Activated T-helper 2 cell treated with anti-CD3 and anti-CD28 coated beads, Interferon-gamma antibody, Interleukin-2, Interleukin-4, amounts not matched to agents 10 μg/mL and 5 μg/mL and 100 μg/mL, durations not matched to agents 14 hours and 24 hours and 36 hours (primary cell): ENCODE measurements at regions of chr2 and their contacts with region 1.

Region 1: DNA sequence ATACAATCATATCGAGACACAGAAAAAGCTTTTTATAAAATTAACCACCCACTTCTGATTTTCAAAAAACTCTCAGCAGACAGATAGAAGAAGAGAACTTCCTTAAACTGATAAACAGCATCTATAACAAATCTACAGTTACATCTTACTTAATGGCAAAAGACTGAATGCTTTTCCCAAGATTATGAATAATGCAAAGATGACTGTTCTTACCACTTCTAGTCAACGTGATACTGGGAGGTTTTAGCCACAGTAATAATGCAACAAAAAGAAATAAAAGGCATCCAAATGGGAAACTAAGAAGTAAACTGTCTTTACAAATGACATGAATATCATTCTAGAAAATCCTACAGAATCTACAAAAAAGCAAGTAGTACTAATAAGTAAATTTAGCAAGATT is 58.0 kb upstream of the TMEM247 start:
- DNase-seq: no peak
- H3K4me3 Mint-ChIP-seq: no peak overlapping the region
- H3K27ac Mint-ChIP-seq: no peak overlapping the region
- H3K4me1 Mint-ChIP-seq: peaks cover 34% of the 10 kb centered on the region
- H3K27me3 Mint-ChIP-seq: no peaks in the 10 kb centered on the region

Region 2: GRCh38 chr2:46394649-46395510 is 26.5 kb before region 1 on chr2:
- intact Hi-C with region 1: loop called (anchors 1 kb)
- DNase-seq: no peak
- H3K4me3 Mint-ChIP-seq: no peak overlapping the region
- H3K27ac Mint-ChIP-seq: peak overlapping the region; percentile 91
- H3K4me1 Mint-ChIP-seq: peaks cover 41% of the 10 kb centered on the region
- H3K27me3 Mint-ChIP-seq: peaks cover 3% of the 10 kb centered on the region

Region 3: GRCh38 chr2:46434851-46435273 is 13.5 kb after region 1 on chr2:
- intact Hi-C with region 1: loop called (anchors 1 kb)
- DNase-seq: no peak
- H3K4me3 Mint-ChIP-seq: peak overlapping the region; percentile 37
- H3K27ac Mint-ChIP-seq: peak overlapping the region; percentile 86
- H3K4me1 Mint-ChIP-seq: peaks cover 94% of the 10 kb centered on the region
- H3K27me3 Mint-ChIP-seq: no peaks in the 10 kb centered on the region

Region 4: GRCh38 chr2:46470114-46470628 is 48.8 kb after region 1 on chr2:
- intact Hi-C with region 1: no loop called
- DNase-seq: no peak
- H3K4me3 Mint-ChIP-seq: no peak overlapping the region
- H3K27ac Mint-ChIP-seq: no peak overlapping the region
- H3K4me1 Mint-ChIP-seq: no peaks in the 10 kb centered on the region
- H3K27me3 Mint-ChIP-seq: peaks cover 25% of the 10 kb centered on the region